ENCODE measurements at regions of chr9 and their contacts with region 1.

Region 1: DNA sequence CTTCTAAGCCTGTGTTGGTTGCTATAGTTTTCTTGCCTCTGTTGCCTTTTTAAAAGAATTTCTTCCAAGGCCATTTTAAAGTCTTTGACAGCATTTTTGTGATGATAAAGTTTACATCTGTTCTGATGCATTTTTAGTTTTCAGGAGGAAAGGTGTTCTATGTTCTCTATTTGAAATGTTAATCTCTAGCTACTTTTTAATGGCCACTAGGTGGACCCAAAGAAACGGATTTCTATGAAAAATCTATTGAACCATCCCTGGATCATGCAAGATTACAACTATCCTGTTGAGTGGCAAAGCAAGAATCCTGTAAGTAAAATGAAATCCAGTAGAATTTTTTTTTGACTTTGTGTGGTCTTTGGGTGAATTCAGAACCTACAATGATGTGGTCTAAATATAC is 60.2 kb downstream of the MELK start:
- DNase-seq: peak in 3 of 14 experiments; percentile 25 to 28 (median 28)
- ATAC-seq: no peak
- H3K4me3 ChIP-seq: no peak overlapping the region
- H3K4me3 Mint-ChIP-seq: no peak overlapping the region
- H3K27ac ChIP-seq: no peak overlapping the region
- H3K27ac Mint-ChIP-seq: no peak overlapping the region
- H3K4me1 ChIP-seq: no peaks in the 10 kb centered on the region
- H3K4me1 Mint-ChIP-seq: no peaks in the 10 kb centered on the region
- H3K27me3 ChIP-seq: no peaks in the 10 kb centered on the region
- H3K27me3 Mint-ChIP-seq: no peaks in the 10 kb centered on the region
- CTCF ChIP-seq: peak; percentile 60

Region 2: GRCh38 chr9:36612946-36613345 is 19.9 kb before region 1 on chr9:
- CTCF ChIA-PET with region 1: no interaction called
- POLR2A ChIA-PET with region 1: no interaction called
- intact Hi-C with region 1: no loop called
- DNase-seq: no peak
- ATAC-seq: no peak
- H3K4me3 ChIP-seq: no peak overlapping the region
- H3K4me3 Mint-ChIP-seq: no peak overlapping the region
- H3K27ac ChIP-seq: no peak overlapping the region
- H3K27ac Mint-ChIP-seq: no peak overlapping the region
- H3K4me1 ChIP-seq: no peaks in the 10 kb centered on the region
- H3K4me1 Mint-ChIP-seq: no peaks in the 10 kb centered on the region
- H3K27me3 ChIP-seq: no peaks in the 10 kb centered on the region
- H3K27me3 Mint-ChIP-seq: no peaks in the 10 kb centered on the region
- CTCF ChIP-seq: no peak

Region 3: GRCh38 chr9:36728651-36729520 is 96.0 kb after region 1 on chr9:
- CTCF ChIA-PET with region 1: interaction called, 6 read pairs
- POLR2A ChIA-PET with region 1: interaction called, 3 read pairs
- intact Hi-C with region 1: loop called (anchors 1 to 2 kb)
- DNase-seq: peak; percentile 38 to 73 (median 48)
- ATAC-seq: peak; percentile 49
- H3K4me3 ChIP-seq: no peak overlapping the region
- H3K4me3 Mint-ChIP-seq: no peak overlapping the region
- H3K27ac ChIP-seq: no peak overlapping the region
- H3K27ac Mint-ChIP-seq: no peak overlapping the region
- H3K4me1 ChIP-seq: no peaks in the 10 kb centered on the region
- H3K4me1 Mint-ChIP-seq: no peaks in the 10 kb centered on the region
- H3K27me3 ChIP-seq: peaks cover 0 to under 1% of the 10 kb centered on the region in 2 experiments
- H3K27me3 Mint-ChIP-seq: no peaks in the 10 kb centered on the region
- CTCF ChIP-seq: peak; percentile 82

Region 4: GRCh38 chr9:36739373-36740116 is 106.7 kb after region 1 on chr9:
- CTCF ChIA-PET with region 1: no interaction called
- POLR2A ChIA-PET with region 1: no interaction called
- intact Hi-C with region 1: no loop called
- DNase-seq: no peak
- ATAC-seq: no peak
- H3K4me3 ChIP-seq: no peak overlapping the region
- H3K4me3 Mint-ChIP-seq: no peak overlapping the region
- H3K27ac ChIP-seq: no peak overlapping the region
- H3K27ac Mint-ChIP-seq: no peak overlapping the region
- H3K4me1 ChIP-seq: peaks cover 4% of the 10 kb centered on the region
- H3K4me1 Mint-ChIP-seq: peaks cover 5% of the 10 kb centered on the region
- H3K27me3 ChIP-seq: peaks cover 30 to 48% of the 10 kb centered on the region in 2 experiments
- H3K27me3 Mint-ChIP-seq: peaks cover 63% of the 10 kb centered on the region
- CTCF ChIP-seq: no peak

Region 5: DNA sequence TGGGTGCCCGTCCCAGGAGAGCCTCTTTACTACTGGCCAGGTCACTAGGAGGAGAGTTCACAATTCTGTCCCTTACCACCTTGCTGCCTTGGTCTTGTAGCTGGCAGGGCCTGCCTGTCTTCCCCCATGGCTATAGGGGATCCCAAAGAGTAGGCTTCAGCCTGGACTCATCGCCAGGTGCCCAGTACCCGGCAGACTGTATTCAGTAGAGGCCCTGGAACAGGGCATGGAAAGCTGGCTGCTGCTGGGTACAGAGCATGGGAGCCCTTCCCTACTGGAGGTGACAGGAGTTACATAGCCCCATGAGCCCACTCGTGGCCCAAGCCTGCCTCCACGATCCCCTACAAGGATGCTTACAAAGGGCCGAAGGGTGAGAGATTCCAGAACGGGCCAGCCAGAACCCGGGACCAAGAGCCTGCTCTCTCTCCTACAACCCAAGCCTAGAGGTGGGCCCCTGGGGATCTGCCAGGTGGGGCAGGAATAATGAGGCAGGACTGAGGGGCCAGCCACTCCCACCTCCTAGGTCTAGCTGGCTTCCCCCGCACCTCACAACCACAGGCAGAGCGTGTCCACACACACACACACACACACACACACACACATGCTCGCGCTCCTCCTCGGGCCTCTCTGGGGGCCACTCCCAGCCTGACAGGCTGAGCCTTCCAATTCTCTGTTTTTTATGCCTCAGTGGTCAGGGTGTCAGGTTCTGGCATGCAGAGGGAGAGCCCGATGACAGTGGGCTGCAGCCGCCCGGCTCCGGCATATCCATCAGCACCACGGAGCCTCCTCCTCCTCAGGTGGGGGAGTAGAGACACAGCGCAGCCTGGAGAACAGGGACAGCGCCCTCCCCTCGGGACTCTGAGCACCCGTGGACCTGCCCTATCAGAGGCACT is 215.1 kb after region 1 on chr9:
- CTCF ChIA-PET with region 1: no interaction called
- POLR2A ChIA-PET with region 1: no interaction called
- intact Hi-C with region 1: no loop called
- DNase-seq: no peak
- ATAC-seq: no peak
- H3K4me3 ChIP-seq: no peak overlapping the region
- H3K4me3 Mint-ChIP-seq: no peak overlapping the region
- H3K27ac ChIP-seq: no peak overlapping the region
- H3K27ac Mint-ChIP-seq: no peak overlapping the region
- H3K4me1 ChIP-seq: no peaks in the 10 kb centered on the region
- H3K4me1 Mint-ChIP-seq: no peaks in the 10 kb centered on the region
- H3K27me3 ChIP-seq: peaks cover 0 to 3% of the 10 kb centered on the region in 2 experiments
- H3K27me3 Mint-ChIP-seq: no peaks in the 10 kb centered on the region
- CTCF ChIP-seq: no peak

Measured in CD4-positive, alpha-beta T cell (primary cell).